Naive thymus-derived CD4-positive, alpha-beta T cell (primary cell): ENCODE measurements at regions of chr13 and their contacts with region 1.

Region 1: DNA sequence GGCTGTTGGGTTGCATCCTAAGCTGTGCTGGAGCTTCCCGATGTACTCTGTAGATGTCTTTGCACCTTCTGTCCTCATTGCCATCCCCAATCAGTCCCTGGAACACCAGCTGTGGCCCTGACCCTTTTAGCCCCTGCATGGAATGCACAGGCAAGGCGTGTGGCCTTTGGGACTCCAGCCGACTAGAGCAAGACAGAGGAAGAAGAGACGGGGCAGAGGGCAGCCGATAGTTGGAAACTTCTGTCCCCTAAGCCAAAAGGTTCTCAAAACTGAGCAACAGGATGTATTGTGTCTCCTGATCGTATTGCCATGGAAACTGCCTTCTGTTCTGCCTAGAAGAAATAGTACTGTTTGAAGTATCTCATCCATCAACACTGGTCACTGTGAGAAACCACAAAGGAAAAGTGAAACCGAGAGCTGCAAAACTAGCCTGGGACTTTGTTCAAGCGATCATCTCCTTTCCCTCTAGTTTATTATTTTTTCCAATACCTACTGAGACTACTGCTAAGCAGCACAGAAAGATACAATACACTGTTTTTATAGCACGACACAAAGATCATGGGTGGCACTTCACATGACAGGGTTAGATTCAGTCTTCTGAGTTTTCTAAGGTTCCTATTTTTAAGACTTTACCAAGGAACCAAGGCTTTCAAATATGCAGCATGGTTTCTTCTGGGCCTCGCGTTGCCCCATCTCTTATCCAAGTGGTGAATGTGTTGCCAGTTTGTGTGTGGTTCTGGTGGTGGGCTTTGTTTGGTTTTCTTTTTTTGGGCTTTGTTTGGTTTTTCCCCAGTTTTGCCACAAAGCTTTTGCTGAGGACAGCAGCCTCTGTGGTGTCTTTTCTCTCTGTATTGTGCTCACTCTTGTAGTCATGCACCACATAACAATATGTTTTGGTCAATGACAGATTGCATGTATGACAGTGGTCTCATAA is 49.2 kb upstream of the GPR183 start:
- DNase-seq: peak in 8 of 9 donors; percentile 58 to 94 (median 92)
- ATAC-seq: peak; percentile 77
- H3K4me3 ChIP-seq: peak overlapping the region; percentile 25
- H3K4me3 Mint-ChIP-seq: peak overlapping the region; percentile 66 to 86 (median 78)
- H3K27ac ChIP-seq: peak overlapping the region; percentile 95
- H3K27ac Mint-ChIP-seq: peak overlapping the region; percentile 97 to 100 (median 99)
- H3K4me1 ChIP-seq: peaks cover 95 to 97% of the 10 kb centered on the region in 2 donors
- H3K4me1 Mint-ChIP-seq: peaks cover 78 to 100% (median 100%) of the 10 kb centered on the region in 7 donors
- H3K27me3 ChIP-seq: no peaks in the 10 kb centered on the region
- H3K27me3 Mint-ChIP-seq: no peaks in the 10 kb centered on the region

Region 2: GRCh38 chr13:98875146-98875729 is 481.2 kb before region 1 on chr13:
- CTCF ChIA-PET with region 1: no interaction called
- POLR2A ChIA-PET with region 1: no interaction called
- intact Hi-C with region 1: loop called in 1 of 2 experiments (anchors 2 kb)
- DNase-seq: no peak
- ATAC-seq: peak; percentile 56
- H3K4me3 ChIP-seq: no peak overlapping the region
- H3K4me3 Mint-ChIP-seq: peak overlapping the region in 1 of 10 donors; percentile 82
- H3K27ac ChIP-seq: no peak overlapping the region
- H3K27ac Mint-ChIP-seq: peak overlapping the region in 4 of 9 donors; percentile 22 to 95 (median 36)
- H3K4me1 ChIP-seq: no peaks in the 10 kb centered on the region
- H3K4me1 Mint-ChIP-seq: peaks cover 5 to 54% (median 23%) of the 10 kb centered on the region in 7 donors
- H3K27me3 ChIP-seq: no peaks in the 10 kb centered on the region
- H3K27me3 Mint-ChIP-seq: no peaks in the 10 kb centered on the region

Region 3: GRCh38 chr13:99214232-99214631 is 142.2 kb before region 1 on chr13:
- CTCF ChIA-PET with region 1: no interaction called
- POLR2A ChIA-PET with region 1: interaction called, 9 read pairs
- intact Hi-C with region 1: loop called in 1 of 2 experiments (anchors 1 kb)
- DNase-seq: peak in 4 of 9 donors; percentile 34 to 53 (median 46)
- ATAC-seq: no peak
- H3K4me3 ChIP-seq: peak overlapping the region; percentile 53
- H3K4me3 Mint-ChIP-seq: peak overlapping the region; percentile 69 to 95 (median 92)
- H3K27ac ChIP-seq: peak overlapping the region; percentile 85
- H3K27ac Mint-ChIP-seq: peak overlapping the region; percentile 94 to 100 (median 99)
- H3K4me1 ChIP-seq: peaks cover 46 to 67% of the 10 kb centered on the region in 2 donors
- H3K4me1 Mint-ChIP-seq: peaks cover 49 to 93% (median 79%) of the 10 kb centered on the region in 7 donors
- H3K27me3 ChIP-seq: no peaks in the 10 kb centered on the region
- H3K27me3 Mint-ChIP-seq: no peaks in the 10 kb centered on the region

Region 4: GRCh38 chr13:99314640-99315176 is 41.7 kb before region 1 on chr13:
- CTCF ChIA-PET with region 1: interaction called, 3 read pairs
- POLR2A ChIA-PET with region 1: interaction called, 205 read pairs
- intact Hi-C with region 1: loop called (anchors 1 kb)
- DNase-seq: peak in 8 of 9 donors; percentile 57 to 89 (median 87)
- ATAC-seq: peak; percentile 80
- H3K4me3 ChIP-seq: peak overlapping the region; percentile 47
- H3K4me3 Mint-ChIP-seq: peak overlapping the region; percentile 46 to 91 (median 78)
- H3K27ac ChIP-seq: peak overlapping the region; percentile 90
- H3K27ac Mint-ChIP-seq: peak overlapping the region; percentile 87 to 99 (median 93)
- H3K4me1 ChIP-seq: peaks cover 56 to 72% of the 10 kb centered on the region in 2 donors
- H3K4me1 Mint-ChIP-seq: peaks cover 58 to 96% (median 78%) of the 10 kb centered on the region in 7 donors
- H3K27me3 ChIP-seq: no peaks in the 10 kb centered on the region
- H3K27me3 Mint-ChIP-seq: no peaks in the 10 kb centered on the region

Region 5: GRCh38 chr13:99339736-99340397 is 16.6 kb before region 1 on chr13:
- CTCF ChIA-PET with region 1: interaction called, 10 read pairs
- POLR2A ChIA-PET with region 1: interaction called, 49 read pairs
- intact Hi-C with region 1: loop called in 1 of 2 experiments (anchors 1 kb)
- DNase-seq: peak in 6 of 9 donors; percentile 32 to 56 (median 49)
- ATAC-seq: peak; percentile 76
- H3K4me3 ChIP-seq: peak overlapping the region; percentile 42
- H3K4me3 Mint-ChIP-seq: peak overlapping the region in 9 of 10 donors; percentile 23 to 79 (median 65)
- H3K27ac ChIP-seq: peak overlapping the region; percentile 41
- H3K27ac Mint-ChIP-seq: peak overlapping the region in 8 of 9 donors; percentile 46 to 96 (median 88)
- H3K4me1 ChIP-seq: peaks cover 39 to 41% of the 10 kb centered on the region in 2 donors
- H3K4me1 Mint-ChIP-seq: peaks cover 47 to 96% (median 82%) of the 10 kb centered on the region in 7 donors
- H3K27me3 ChIP-seq: no peaks in the 10 kb centered on the region
- H3K27me3 Mint-ChIP-seq: no peaks in the 10 kb centered on the region

Region 6: DNA sequence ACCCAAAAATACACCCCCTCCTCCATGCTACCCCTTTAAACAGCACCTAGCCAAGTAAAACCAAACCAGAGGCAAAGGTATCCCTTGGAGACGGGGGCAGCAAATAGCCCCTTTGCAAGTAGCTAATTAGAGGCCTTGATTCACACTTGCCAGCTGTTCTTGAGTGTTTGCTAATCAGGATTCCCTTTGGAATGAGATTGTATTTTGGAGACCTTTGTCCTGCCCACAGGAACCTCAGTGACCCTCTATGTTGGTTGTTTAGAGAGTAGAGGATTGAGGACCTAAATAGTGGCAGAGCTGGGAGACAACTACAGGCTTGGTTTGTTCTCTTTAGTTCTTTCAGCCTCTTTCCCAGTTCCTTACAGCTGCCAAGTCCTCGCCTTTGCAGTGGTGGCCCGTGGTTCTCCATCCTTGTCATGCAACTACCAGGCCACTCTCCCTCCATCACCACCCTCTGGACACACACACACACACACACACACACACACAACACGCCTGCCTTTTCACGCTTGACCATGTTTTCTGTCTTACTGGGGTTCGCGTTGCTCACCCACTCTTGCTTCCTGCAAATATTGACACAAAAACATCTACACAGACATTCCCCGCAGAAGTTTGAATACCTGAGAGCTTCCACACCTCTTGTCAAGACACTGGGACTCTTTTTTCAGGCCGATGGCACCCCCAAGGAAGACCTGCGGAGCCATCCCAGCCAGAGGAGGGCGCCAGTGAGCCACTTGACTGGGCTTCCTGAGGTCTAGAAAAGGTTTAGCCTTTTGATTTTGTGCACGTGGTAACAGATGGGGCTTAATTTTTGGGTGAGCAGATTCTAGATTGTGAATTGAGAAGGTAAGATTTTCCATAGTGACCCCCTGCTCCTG is 30.7 kb after region 1 on chr13:
- CTCF ChIA-PET with region 1: interaction called, 34 read pairs
- POLR2A ChIA-PET with region 1: interaction called, 132 read pairs
- intact Hi-C with region 1: loop called (anchors 1 kb)
- DNase-seq: peak; percentile 74 to 89 (median 84)
- ATAC-seq: peak; percentile 65
- H3K4me3 ChIP-seq: no peak overlapping the region
- H3K4me3 Mint-ChIP-seq: peak overlapping the region in 9 of 10 donors; percentile 2 to 73 (median 62)
- H3K27ac ChIP-seq: peak overlapping the region; percentile 85
- H3K27ac Mint-ChIP-seq: peak overlapping the region; percentile 44 to 99 (median 98)
- H3K4me1 ChIP-seq: peaks cover 59 to 65% of the 10 kb centered on the region in 2 donors
- H3K4me1 Mint-ChIP-seq: peaks cover 35 to 83% (median 76%) of the 10 kb centered on the region in 7 donors
- H3K27me3 ChIP-seq: no peaks in the 10 kb centered on the region
- H3K27me3 Mint-ChIP-seq: no peaks in the 10 kb centered on the region

Region 7: GRCh38 chr13:99436686-99437416 is 80.4 kb after region 1 on chr13:
- CTCF ChIA-PET with region 1: interaction called, 12 read pairs
- POLR2A ChIA-PET with region 1: interaction called, 21 read pairs
- intact Hi-C with region 1: loop called (anchors 1 kb)
- DNase-seq: peak; percentile 92 to 98 (median 93)
- ATAC-seq: peak; percentile 69
- H3K4me3 ChIP-seq: peak overlapping the region; percentile 39
- H3K4me3 Mint-ChIP-seq: peak overlapping the region; percentile 17 to 79 (median 68)
- H3K27ac ChIP-seq: peak overlapping the region; percentile 83
- H3K27ac Mint-ChIP-seq: peak overlapping the region; percentile 67 to 99 (median 87)
- H3K4me1 ChIP-seq: peaks cover 43 to 48% of the 10 kb centered on the region in 2 donors
- H3K4me1 Mint-ChIP-seq: peaks cover 28 to 68% (median 59%) of the 10 kb centered on the region in 7 donors
- H3K27me3 ChIP-seq: no peaks in the 10 kb centered on the region
- H3K27me3 Mint-ChIP-seq: peaks cover 0 to 30% (median 0%) of the 10 kb centered on the region in 5 donors